Activated T-helper 1 cell treated with anti-CD3 and anti-CD28 coated beads, Interleukin-12 subunit alpha, Interleukin-12 subunit beta, Interleukin-2, Interleukin-4 antibody, amounts not matched to agents 30 ng/mL and 10 ng/mL and 1 ng/mL, durations not matched to agents 14 hours and 24 hours and 36 hours (primary cell): ENCODE measurements at regions of chr11 and their contacts with region 1.

Region 1: DNA sequence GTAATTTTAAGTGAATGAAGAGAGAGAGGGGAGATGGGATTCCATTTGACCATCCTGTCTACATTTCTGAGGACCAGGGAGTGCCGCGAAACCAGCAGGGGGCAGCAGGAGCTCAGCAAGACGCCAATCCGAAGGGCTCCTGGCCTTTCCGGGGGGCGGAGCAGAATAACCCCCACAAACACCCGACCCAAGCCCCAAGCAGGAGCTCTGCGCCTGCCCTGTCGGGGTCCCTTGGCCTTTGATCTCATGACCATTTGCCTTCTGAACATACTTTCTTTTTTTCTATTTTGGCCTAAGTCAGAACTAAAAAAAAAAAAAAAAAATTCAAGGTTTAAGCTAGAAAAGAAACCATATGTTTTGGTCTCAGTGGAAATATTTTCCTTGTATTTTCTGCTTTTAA is 21.9 kb upstream of the SCN2B start:
- DNase-seq: peak; percentile 67
- H3K4me3 Mint-ChIP-seq: peak overlapping the region; percentile 21
- H3K27ac Mint-ChIP-seq: peak overlapping the region; percentile 81
- H3K4me1 Mint-ChIP-seq: peaks cover 13% of the 10 kb centered on the region
- H3K27me3 Mint-ChIP-seq: no peaks in the 10 kb centered on the region

Region 2: DNA sequence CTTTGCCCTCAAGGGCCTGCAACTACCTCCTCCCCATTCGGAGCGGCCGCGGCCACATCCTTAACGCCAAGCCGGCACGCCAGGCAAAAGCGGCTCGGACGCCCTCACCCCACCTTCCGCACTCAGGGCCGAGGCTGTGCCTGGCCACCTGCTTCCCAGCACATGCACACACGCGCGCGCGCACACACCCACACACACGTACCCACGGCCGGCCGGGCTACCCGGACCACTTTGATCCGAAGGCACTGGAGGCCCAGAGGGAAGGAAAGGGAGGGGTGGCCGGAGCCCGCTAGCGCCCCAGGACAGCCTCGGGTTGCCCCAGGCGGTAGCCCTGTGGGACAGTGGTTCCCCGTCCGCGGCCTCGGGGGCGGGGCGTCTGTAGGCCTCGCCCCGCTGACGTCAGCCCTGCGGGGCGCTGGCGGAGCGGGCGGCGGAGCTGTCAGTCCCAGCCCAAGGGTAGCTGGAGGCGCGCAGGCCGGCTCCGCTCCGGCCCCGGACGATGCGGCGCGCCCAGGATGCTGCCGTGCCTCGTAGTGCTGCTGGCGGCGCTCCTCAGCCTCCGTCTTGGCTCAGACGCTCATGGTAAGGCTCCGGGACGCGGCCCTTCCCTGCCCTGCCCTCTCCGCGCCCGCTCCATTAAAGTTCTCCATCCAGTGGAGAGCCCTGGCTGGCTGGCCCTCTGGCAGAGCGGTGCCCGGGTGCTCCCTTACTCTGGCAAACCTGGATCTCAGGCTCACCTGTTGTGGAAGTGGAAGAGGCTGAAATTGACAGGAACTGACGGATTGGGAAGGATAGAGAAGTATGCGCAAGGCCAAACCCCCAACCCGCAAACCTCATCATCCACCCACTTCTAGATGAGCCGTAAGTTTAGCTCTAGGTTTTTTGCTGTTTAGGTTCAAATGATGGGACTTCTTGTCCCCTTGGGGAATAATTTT is 212.2 kb before region 1 on chr11 and contains the start of gene IL10RA:
- intact Hi-C with region 1: loop called (anchors 5 kb)
- DNase-seq: peak; percentile 87
- H3K4me3 Mint-ChIP-seq: peak within 1 kb of the TSS; percentile 89
- H3K27ac Mint-ChIP-seq: peak within 1 kb of the TSS; percentile 92
- H3K4me1 Mint-ChIP-seq: peaks cover 79% of the 10 kb centered on the region
- H3K27me3 Mint-ChIP-seq: no peaks in the 10 kb centered on the region
- total RNA-seq, gene IL10RA: 87.8 and 88.3 TPM in 2 replicates

Region 3: DNA sequence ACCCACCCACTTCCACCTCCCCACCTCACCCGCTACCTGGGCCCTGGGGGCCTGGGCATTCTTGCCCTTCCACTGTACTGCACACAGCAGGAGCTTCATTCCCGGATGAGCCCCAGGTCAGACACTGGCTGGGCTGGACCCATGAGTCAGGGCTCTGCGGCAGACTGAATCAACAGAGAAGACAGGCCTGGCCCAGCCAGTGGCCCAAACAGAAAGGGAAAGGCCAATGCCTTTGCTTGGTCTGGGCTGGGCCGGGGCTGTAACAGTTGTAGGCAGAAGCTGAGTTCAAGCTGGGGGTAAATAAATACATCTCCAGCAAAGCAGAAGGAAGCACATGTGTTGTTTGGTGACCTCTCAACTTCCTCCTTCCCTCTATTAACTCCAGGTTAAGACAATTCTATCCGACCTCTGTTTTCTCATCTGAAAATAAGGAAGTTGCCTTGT is 109.9 kb before region 1 on chr11:
- intact Hi-C with region 1: no loop called
- DNase-seq: no peak
- H3K4me3 Mint-ChIP-seq: no peak overlapping the region
- H3K27ac Mint-ChIP-seq: no peak overlapping the region
- H3K4me1 Mint-ChIP-seq: no peaks in the 10 kb centered on the region
- H3K27me3 Mint-ChIP-seq: peaks cover 2% of the 10 kb centered on the region

Region 4: GRCh38 chr11:118098996-118099837 is 99.2 kb before region 1 on chr11:
- intact Hi-C with region 1: no loop called
- DNase-seq: no peak
- H3K4me3 Mint-ChIP-seq: no peak overlapping the region
- H3K27ac Mint-ChIP-seq: no peak overlapping the region
- H3K4me1 Mint-ChIP-seq: no peaks in the 10 kb centered on the region
- H3K27me3 Mint-ChIP-seq: peaks cover 19% of the 10 kb centered on the region

Region 5: GRCh38 chr11:118145285-118146227 is 52.8 kb before region 1 on chr11:
- intact Hi-C with region 1: loop called (anchors 1 kb)
- DNase-seq: peak; percentile 86
- H3K4me3 Mint-ChIP-seq: peak overlapping the region; percentile 87
- H3K27ac Mint-ChIP-seq: peak overlapping the region; percentile 70
- H3K4me1 Mint-ChIP-seq: peaks cover 17% of the 10 kb centered on the region
- H3K27me3 Mint-ChIP-seq: peaks cover 48% of the 10 kb centered on the region

Region 6: DNA sequence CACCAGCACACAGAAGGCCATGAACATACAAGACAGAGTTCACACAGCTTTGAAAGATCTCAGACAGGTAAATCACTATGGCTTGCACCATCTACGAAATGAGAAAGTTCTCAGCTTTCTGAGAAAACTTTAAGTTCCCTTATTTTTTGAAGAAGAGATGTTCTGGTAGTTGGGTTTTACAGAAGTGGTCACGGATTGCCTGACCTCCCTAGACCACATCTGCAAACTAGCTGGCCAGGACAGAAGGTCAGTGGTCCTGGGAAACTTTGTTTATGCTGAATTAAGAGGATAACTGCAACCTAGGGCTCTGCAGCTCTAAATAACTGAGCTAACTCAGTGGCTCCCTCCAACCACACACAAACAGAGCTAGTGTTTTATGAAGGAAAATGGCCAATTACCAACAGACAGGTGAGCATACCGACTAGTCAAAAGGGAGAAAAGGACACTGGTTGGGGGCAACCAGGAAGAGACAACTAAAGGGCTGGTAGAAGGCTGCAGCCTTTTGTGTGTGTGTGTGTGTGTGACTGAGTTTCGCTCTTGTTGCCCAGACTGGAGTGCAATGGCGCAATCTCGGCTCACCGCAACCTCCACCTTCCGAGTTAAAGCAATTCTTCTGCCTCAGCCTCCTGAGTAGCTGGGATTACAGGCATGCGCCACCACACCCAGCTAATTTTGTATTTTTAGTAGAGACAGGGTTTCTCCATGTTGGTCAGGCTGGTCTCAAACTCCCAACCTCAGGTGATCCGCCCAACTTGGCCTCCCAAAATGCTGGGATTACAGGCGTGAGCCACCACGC is 13.4 kb before region 1 on chr11:
- intact Hi-C with region 1: no loop called
- DNase-seq: no peak
- H3K4me3 Mint-ChIP-seq: no peak overlapping the region
- H3K27ac Mint-ChIP-seq: no peak overlapping the region
- H3K4me1 Mint-ChIP-seq: peaks cover 5% of the 10 kb centered on the region
- H3K27me3 Mint-ChIP-seq: peaks cover 30% of the 10 kb centered on the region

Region 7: GRCh38 chr11:118240999-118241768 is 42.8 kb after region 1 on chr11:
- intact Hi-C with region 1: loop called (anchors 1 kb)
- DNase-seq: peak; percentile 66
- H3K4me3 Mint-ChIP-seq: peak overlapping the region; percentile 83
- H3K27ac Mint-ChIP-seq: peak overlapping the region; percentile 99
- H3K4me1 Mint-ChIP-seq: peaks cover 89% of the 10 kb centered on the region
- H3K27me3 Mint-ChIP-seq: no peaks in the 10 kb centered on the region

Region 8: GRCh38 chr11:118290923-118291322 is 92.6 kb after region 1 on chr11:
- intact Hi-C with region 1: loop called (anchors 1 kb)
- DNase-seq: peak; percentile 40
- H3K4me3 Mint-ChIP-seq: no peak overlapping the region
- H3K27ac Mint-ChIP-seq: peak overlapping the region; percentile 15
- H3K4me1 Mint-ChIP-seq: peaks cover 29% of the 10 kb centered on the region
- H3K27me3 Mint-ChIP-seq: peaks cover 2% of the 10 kb centered on the region

Region 9: GRCh38 chr11:118343981-118344515 is 145.7 kb after region 1 on chr11 and contains the start of gene CD3G:
- intact Hi-C with region 1: loop called (anchors 2 kb)
- DNase-seq: peak; percentile 69
- H3K4me3 Mint-ChIP-seq: peak within 1 kb of the TSS; percentile 90
- H3K27ac Mint-ChIP-seq: peak within 1 kb of the TSS; percentile 86
- H3K4me1 Mint-ChIP-seq: peaks cover 82% of the 10 kb centered on the region
- H3K27me3 Mint-ChIP-seq: no peaks in the 10 kb centered on the region
- total RNA-seq, gene CD3G: 134 and 145 TPM in 2 replicates

Region 10: DNA sequence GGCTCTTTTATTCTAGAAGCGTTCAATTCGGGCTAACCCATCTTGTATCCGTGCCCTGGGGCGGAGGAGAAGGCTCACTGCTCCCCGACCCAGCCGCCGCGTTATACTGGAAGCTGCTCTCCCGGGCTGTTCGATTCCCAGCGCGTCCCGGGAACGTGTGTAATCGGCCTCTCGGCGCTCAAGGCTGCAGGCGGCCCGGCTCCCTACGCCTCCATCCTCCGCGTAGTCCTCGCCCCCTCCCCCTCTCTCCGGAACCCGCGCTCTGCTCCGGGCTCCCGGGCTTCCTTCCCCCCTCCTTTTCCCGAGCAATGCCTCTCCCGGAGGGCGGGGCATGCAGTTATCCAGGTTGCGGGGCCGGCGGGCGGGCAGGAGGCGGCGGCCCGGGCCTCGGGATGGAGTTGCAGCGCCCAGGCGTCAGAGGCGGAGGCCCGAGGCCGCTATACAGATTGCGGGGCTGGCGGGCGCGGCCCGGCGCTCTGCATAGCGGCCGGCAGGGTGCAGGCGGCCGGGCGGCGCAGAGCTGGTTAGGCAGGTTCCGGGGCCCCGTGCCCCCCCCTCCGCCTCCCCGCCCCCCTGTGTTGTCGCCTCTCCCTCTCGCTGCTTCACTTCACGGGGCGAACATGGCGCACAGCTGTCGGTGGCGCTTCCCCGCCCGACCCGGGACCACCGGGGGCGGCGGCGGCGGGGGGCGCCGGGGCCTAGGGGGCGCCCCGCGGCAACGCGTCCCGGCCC is 237.7 kb after region 1 on chr11 and contains the start of gene KMT2A:
- intact Hi-C with region 1: loop called (anchors 2 kb)
- DNase-seq: peak; percentile 92
- H3K4me3 Mint-ChIP-seq: peak within 1 kb of the TSS; percentile 91
- H3K27ac Mint-ChIP-seq: peak within 1 kb of the TSS; percentile 89
- H3K4me1 Mint-ChIP-seq: peaks cover 45% of the 10 kb centered on the region
- H3K27me3 Mint-ChIP-seq: peaks cover 3% of the 10 kb centered on the region
- total RNA-seq, gene KMT2A: 78.4 and 87.8 TPM in 2 replicates

Region 11: GRCh38 chr11:118771547-118772288 is 573.3 kb after region 1 on chr11:
- intact Hi-C with region 1: no loop called
- DNase-seq: no peak
- H3K4me3 Mint-ChIP-seq: no peak overlapping the region
- H3K27ac Mint-ChIP-seq: peak overlapping the region; percentile 82
- H3K4me1 Mint-ChIP-seq: peaks cover 67% of the 10 kb centered on the region
- H3K27me3 Mint-ChIP-seq: no peaks in the 10 kb centered on the region